GM13976 (cell line): ENCODE measurements at regions of chr6 and their contacts with region 1.

Region 1: DNA sequence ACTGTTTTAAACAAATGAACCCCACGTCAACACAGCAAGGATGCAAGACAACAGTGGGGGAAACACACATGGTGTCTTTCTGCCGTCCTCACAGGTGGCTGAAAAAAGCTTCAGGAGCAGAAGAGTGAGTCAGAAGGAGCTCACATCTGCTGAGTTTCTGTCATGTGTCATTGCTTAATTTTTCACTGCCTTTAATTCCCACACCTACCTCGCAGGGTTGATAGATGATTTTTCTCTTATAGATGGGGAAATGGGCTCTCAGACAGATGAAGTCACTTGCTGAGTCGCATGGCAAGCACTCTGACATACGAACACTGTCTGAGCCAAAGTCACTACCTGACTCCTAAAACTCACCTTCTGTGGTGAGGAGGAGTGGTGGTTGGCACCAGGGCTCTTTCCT is 28.3 kb upstream of the CARMIL1 start:
- DNase-seq: peak; percentile 34
- CTCF ChIP-seq: no peak

Region 2: DNA sequence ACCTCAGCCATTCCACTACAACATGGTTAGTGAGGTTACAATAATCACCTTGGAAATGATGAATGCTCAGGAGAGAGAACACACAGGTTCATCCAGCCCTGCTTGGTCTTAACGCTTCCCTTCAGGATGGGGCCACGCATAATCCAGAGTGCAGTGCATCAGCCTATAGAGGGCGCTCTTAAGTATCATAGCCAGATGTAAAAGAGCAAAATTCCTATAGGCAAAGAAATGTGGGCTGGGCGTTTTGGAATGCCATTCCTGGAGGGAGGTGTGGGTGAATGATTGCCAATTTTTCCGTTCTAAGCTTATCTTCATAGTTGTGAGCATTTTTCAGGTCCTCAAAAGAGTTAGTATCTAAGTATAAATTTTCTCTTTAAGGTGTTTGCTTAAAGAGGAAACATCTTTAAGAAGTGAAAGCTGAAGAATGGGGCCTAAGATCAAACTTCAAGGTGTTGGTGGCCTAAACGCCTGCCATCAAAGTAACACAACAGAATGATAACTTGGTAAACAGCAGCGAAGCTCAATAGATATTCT is 316.9 kb before region 1 on chr6:
- in situ Hi-C with region 1: no loop called
- DNase-seq: no peak
- CTCF ChIP-seq: peak; percentile 89

Region 3: GRCh38 chr6:25556516-25556915 is 305.6 kb after region 1 on chr6:
- in situ Hi-C with region 1: loop called (anchors 25 kb)
- DNase-seq: peak; percentile 41
- CTCF ChIP-seq: peak; percentile 84

Region 4: DNA sequence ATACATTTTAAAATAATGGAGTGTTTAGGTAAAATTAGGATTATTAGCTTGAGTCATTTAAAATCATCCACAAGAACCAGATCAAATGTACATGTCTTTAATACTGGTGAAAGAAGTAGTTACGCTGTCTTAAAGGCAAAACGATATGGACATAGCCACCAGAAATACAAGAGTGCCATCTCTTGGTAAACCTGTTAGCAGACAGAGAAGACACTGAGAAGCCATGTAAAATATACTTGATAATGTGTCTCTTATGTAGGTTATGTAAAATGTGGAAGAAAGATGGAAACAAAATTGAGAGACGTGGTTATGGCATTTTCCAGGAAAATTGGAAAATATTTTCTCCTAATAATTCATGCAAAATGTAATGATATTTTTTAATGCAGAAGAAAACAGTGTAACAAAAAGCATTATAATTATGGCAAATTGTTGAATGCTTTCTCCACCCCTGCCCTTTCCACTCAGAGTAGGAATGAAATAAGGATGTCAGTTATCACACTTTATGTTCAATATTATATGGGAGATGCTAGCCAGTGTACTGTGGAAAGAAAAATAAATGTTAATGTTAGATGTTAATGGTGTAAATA is 691.8 kb after region 1 on chr6:
- in situ Hi-C with region 1: loop called (anchors 25 kb)
- DNase-seq: peak; percentile 37
- CTCF ChIP-seq: peak; percentile 28